Heart right ventricle (tissue), 16 donors: ENCODE measurements at regions of chr6 and their contacts with region 1.

Region 1: DNA sequence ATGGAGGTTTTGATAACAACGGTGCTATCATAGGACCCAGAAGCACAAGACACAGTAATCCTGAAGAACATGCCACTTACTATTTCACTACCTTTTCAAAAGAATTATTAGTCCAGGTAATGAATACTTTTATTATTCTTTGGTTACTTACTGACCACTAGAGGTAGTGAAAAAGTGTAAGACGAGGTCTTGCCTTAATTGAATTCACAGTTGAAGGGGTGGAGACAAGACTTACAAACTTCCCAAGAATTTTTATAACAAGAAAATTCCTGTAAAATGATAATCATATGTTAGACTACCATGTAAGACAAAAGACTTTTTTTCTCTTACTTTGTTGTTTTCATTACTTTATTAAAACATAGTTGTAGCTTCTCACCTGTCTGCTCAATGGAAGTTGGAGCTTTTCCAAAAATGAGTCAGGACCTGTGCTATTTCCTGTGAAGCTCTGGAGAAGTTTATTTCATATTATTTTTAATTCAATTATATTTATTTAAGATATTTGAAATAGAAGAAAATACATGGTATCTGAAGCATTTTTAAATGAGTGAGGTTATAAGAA is 52.4 kb downstream of the DOP1A start:
- DNase-seq: no peak
- ATAC-seq: no peak
- H3K4me3 ChIP-seq: no peak overlapping the region
- H3K27ac ChIP-seq: no peak overlapping the region
- H3K4me1 ChIP-seq: no peaks in the 10 kb centered on the region
- H3K27me3 ChIP-seq: no peaks in the 10 kb centered on the region
- CTCF ChIP-seq: no peak

Region 2: DNA sequence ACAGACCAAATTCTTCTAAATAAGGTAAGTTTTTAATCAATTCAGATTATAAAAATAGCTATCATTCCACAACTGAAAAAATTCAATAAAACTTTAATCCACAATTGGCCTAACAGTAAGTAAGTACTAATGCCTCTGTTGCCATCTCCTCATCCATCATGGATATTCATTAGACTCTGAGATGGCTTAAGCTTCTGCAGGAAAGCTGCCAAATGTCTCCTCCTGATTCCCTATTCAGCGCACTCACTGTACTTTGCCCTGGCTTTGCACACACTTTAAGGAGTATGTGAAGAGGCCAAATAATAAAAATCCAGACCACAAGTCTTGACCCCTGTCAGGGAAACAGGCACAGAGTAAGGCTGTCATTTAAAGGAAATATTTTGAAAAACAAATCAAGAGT is 49.7 kb after region 1 on chr6:
- intact Hi-C with region 1: loop called in 2 of 10 experiments (anchors 5 to 10 kb)
- DNase-seq: no peak
- ATAC-seq: no peak
- H3K4me3 ChIP-seq: no peak overlapping the region
- H3K27ac ChIP-seq: no peak overlapping the region
- H3K4me1 ChIP-seq: no peaks in the 10 kb centered on the region
- H3K27me3 ChIP-seq: no peaks in the 10 kb centered on the region
- CTCF ChIP-seq: no peak

Region 3: GRCh38 chr6:83176246-83176645 is 56.4 kb after region 1 on chr6:
- intact Hi-C with region 1: loop called in 1 of 10 experiments (anchors 10 kb)
- DNase-seq: no peak
- ATAC-seq: no peak
- H3K4me3 ChIP-seq: no peak overlapping the region
- H3K27ac ChIP-seq: no peak overlapping the region
- H3K4me1 ChIP-seq: peaks cover 0 to 7% (median 0%) of the 10 kb centered on the region in 9 donors
- H3K27me3 ChIP-seq: no peaks in the 10 kb centered on the region
- CTCF ChIP-seq: no peak